HAP-1 (cell line): ENCODE measurements at regions of chr9 and their contacts with region 1.

Region 1: DNA sequence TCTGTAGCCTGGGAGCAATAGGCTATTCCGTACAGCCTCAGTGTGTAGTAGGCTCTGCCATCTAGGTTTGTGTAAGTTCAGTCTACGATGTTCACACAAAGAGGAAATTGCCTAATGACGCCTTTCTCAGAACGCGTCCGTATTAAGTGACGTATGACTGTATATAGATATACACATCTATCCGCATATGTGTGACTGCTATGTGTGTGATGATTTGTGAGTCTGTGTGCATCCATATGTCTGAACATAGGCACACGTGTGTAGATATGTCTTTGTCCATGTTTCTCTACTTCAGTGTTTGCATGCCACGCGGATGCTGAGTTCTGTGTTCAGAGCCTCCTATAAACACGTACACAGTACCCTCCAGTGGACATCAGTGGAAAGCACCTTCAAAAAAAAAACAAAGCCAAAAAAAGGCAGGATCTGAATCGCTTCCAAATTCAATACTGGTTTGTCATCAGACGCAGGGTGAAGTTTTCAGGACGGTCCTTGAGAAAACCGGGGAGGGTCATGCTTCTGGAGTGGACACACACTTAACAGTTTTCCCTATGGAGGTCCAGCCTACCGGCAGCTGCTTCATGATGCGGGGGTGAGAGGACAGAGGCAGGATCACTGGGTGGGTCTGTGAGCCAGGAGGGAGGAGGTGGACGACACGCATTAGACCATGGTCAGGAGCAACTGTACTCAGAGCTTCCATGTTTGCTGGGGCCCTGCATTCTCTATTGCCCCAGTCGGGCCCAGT is 29.5 kb upstream of the ALDH1B1 start:
- DNase-seq: peak; percentile 65 to 73
- H3K4me3 ChIP-seq: no peak overlapping the region
- H3K4me1 ChIP-seq: peaks cover 23% of the 10 kb centered on the region
- H3K27me3 ChIP-seq: no peaks in the 10 kb centered on the region

Region 2: DNA sequence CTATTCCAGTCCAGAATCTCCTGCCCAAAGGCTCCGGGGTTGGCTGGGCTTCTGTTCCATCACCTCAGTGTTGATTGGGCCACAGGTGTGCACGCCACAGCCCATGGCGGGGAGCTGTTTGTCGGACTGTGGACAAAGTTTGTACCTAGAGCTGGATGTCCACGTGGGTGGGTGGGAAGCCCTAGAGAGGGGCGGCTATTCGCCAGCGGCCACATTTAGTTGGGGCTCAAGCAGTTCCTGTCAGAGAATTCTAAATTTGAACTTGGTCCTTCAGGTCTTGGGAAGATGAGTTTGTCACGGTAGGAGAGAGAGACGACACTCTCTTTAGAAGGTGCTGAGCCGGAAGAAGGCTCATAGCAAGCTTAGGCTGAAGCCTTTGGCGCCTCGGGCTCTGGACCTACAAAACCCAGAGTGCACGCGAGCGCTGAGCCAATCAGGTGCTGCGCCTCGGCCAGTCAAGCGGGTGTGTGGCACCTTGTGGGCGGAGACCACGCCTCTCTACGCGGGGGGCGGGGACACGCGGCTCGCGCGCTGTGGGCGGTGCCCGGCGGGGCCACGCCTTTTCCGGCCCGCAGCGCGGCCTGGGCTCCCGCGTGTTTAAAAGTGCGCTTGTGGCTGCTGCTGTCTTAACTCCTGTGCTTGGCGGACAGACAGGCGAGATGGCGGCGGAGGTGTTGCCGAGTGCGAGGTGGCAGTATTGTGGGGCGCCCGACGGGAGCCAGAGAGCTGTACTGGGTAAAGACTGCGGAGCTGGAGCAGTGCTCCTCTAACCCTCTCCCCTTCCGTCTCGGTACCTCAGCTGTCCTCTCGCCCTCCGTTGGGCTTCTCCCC is 877.4 kb before region 1 on chr9 and contains the start of gene POLR1E:
- in situ Hi-C with region 1: loop called (anchors 25 kb)
- DNase-seq: peak; percentile 92 to 97
- H3K4me3 ChIP-seq: peak within 1 kb of the TSS; percentile 89
- H3K4me1 ChIP-seq: peaks cover 15% of the 10 kb centered on the region
- H3K27me3 ChIP-seq: no peaks in the 10 kb centered on the region

Region 3: DNA sequence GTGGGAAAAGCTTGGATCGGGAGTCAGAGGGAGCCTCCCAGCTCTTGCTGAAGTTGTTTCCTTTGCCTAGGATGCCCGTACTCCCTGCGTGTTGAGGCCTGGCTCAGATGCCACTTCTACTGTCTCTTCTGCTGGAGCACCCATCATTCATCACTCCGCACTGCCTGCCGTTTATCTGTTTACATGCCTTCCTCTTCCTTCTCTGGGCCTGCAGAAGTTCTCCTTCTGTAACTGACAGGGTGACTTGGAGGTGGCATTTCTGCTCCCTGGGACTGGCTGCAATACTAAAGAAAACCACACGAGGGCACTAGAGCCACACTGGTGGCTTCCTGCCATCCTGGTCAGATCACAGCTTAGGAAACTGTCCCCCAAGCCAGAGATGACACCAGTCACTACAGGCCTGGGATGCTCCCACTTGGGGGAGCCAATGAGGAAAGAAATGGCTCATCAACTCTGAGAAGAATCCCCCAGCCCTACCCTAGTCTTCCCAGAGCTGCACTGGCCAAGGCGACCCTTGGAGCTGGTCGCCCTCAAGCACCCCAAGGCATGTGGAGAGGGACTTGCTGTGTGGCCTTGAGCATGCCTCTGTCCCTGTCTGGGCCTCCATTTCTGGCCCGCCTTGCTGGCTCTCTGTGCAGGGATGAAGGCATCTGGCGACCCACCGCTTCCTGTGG is 449.4 kb before region 1 on chr9:
- in situ Hi-C with region 1: loop called (anchors 5 kb)
- DNase-seq: peak; percentile 73 to 91
- H3K4me3 ChIP-seq: no peak overlapping the region
- H3K4me1 ChIP-seq: peaks cover 3% of the 10 kb centered on the region
- H3K27me3 ChIP-seq: no peaks in the 10 kb centered on the region

Region 4: DNA sequence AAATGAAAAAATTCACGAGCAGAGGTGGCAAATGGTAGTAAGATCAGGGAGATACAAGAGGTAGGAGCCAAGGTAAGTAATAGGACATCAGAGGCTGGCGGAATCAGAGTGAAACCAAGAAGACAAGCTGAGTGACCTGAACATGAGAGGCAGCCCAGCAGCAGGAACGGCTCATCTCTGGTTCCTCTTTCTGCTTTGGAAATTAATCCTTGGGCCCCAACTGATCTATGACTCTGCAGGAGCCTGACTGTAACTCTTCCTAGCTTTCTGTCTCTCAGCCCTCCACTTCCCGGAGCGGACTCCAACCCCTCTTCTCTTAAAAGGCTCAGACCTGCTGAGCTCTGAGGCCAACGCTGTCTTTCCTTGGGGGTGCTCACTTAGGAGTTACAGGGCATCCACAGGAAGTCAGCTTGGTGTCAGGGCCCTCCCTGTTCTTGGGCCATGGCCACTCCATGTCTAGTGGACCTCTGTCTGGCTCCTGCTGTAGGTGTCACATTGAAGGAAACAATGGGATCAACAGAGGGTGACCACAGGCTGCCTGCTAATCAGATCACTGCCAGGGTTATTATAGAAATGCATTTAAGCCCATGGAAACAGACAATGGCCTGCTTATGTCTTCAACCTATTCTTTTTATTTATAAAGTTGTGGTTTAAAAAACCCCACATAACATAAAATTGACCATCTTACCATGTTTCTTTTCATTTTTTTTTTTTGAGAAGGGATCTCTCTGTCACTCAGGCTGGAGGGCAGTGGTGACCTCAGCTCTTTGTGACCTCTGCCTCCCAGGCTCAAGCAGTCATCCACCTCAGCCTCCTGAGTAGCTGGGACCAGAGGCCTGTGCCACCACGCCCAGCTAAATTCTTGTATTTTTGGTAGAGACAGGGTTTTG is 271.5 kb before region 1 on chr9:
- in situ Hi-C with region 1: loop called (anchors 5 kb)
- DNase-seq: peak; percentile 44 to 46
- H3K4me3 ChIP-seq: no peak overlapping the region
- H3K4me1 ChIP-seq: peaks cover 28% of the 10 kb centered on the region
- H3K27me3 ChIP-seq: no peaks in the 10 kb centered on the region

Region 5: DNA sequence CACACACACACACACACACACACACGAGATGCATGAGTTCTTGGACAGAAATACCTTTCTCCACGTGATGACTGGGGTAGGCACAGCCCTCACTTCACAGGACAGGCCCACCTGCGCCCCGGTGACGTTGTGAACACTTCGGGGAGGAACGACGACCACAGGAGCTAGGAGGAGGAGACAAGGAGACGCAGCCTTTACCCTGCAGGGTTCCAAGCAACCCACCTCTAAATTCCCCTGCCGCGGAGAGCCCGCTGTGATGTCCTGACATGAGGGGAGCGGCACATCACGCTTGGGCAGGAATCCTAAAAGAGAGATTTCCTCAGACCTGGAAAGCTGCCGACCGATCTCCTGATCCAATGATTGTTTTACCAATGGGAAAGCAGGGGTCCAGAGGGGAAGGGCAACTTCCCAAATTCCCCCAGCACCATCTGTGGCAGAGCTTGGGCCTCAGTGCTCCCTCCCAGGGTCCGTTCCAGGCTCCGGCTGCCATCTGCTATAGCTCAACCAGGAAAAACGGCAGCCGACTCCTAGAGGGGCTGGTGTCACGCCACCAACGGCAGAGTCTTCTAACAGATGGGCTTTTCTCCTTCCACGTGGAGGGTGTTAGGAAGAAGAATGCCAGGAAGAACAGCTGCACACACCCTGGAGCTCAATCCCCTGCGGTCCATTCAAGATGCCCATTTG is 51.2 kb after region 1 on chr9:
- in situ Hi-C with region 1: no loop called
- DNase-seq: no peak
- H3K4me3 ChIP-seq: no peak overlapping the region
- H3K4me1 ChIP-seq: no peaks in the 10 kb centered on the region
- H3K27me3 ChIP-seq: no peaks in the 10 kb centered on the region

Region 6: DNA sequence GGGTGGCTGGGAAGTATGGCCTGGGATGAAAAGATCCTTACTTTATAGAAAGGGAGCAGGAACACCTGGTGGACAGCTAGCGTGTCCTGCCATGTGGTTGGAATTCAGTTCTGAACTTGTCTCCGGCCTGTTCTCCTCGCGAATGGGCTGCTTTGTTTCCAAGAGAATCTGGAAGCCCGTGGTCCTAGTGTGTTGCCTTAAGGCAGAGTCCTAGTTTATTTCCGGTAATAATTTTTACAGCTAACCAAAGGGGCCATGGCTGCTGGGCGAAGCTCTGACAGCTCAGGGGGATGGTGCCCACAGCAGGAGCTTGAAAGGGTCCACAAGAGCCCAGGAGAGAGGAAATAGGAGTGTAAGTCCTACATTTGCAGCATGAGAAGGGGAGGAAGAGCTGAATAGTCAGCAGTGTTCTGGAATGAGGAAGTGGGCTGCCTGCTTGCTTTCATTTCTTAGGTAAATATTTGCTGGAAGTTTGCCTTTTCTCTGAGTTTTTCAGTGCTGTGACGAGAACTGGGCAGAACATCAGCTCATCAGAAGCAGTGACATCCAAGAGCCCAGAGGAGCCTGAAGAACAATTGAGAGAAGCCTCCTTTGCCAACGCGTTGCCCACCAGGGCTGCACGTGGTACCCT is 74.3 kb after region 1 on chr9:
- in situ Hi-C with region 1: no loop called
- DNase-seq: no peak
- H3K4me3 ChIP-seq: no peak overlapping the region
- H3K4me1 ChIP-seq: peaks cover 12% of the 10 kb centered on the region
- H3K27me3 ChIP-seq: peaks cover 20% of the 10 kb centered on the region

Region 7: DNA sequence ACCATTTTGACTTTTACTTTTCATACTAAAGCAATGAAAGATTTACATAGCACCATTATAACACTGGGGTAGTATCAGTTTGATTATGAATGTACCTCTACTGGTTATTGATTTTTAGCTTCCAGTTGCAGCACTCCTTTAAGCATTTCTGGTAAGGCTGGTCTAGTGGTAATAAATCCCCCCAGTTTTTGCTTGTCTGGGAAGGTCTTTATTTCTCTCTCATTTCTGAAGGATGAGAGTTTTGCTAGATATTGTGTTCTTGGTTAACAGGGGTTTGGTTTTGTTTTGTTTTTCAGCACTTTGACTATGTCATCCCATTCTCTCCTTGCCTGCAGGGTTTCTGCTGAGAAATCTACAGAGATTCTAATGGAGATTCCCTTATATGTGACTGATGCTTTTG is 88.1 kb after region 1 on chr9:
- in situ Hi-C with region 1: no loop called
- DNase-seq: no peak
- H3K4me3 ChIP-seq: no peak overlapping the region
- H3K4me1 ChIP-seq: peaks cover 9% of the 10 kb centered on the region
- H3K27me3 ChIP-seq: peaks cover 6% of the 10 kb centered on the region